Heart right ventricle (tissue), 16 donors: ENCODE measurements at regions of chr13 and their contacts with region 1.

Region 1: DNA sequence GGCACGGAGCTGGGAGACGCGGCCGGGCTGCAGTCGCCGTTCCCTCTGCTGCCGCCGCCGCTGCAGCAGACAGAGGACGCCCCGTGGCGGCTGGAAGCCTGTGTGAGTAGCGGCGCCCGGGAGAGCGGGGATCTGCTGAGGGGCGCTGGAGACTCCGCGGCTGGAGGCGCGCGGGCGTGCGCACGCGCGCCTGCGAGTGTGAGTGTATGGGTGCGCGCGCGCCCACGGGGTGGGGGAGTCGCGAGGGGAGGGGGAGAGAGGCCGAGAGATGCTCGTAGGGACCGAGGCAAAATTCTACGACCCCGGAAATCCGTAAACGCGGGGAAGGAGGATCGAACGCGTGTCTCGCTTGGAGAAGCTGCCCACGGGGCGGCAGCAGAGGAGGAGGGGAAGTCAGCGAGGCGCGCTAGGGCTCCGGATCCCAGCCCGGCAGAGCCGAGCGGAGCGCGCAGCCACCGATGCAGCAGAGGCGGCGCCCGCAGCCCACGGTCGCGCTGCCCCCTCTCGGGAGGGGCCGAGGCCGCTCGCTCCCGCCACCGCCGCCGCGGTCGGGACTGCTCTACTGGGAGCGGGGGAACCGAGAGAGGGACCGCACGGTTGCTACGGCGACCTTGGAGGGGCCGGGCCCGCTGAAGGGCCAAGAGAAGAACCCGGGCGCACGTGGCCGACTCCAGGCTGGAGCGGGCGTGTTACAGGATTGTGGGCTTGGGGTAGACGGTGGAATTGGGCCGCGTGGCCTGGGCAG is at the start of gene ENOX1:
- DNase-seq: peak; percentile 67 to 78
- ATAC-seq: peak; percentile 79 to 93 (median 84)
- H3K4me3 ChIP-seq: peak within 1 kb of the TSS; percentile 50 to 89 (median 70)
- H3K27ac ChIP-seq: peak within 1 kb of the TSS; percentile 54 to 90 (median 84)
- H3K4me1 ChIP-seq: peaks cover 0 to 50% (median 32%) of the 10 kb centered on the region in 9 donors
- H3K27me3 ChIP-seq: peaks cover 0 to 50% (median 28%) of the 10 kb centered on the region in 7 donors
- CTCF ChIP-seq: peak in 8 of 9 donors; percentile 18 to 52 (median 30)
- total RNA-seq, gene ENOX1: 3.1 to 10.4 (median 7.7) TPM

Region 2: GRCh38 chr13:43303033-43303729 is 483.8 kb before region 1 on chr13:
- intact Hi-C with region 1: loop called in 3 of 10 experiments (anchors 5 to 10 kb)
- DNase-seq: peak; percentile 57 to 63
- ATAC-seq: peak; percentile 77 to 92 (median 86)
- H3K4me3 ChIP-seq: no peak overlapping the region
- H3K27ac ChIP-seq: peak overlapping the region in 4 of 10 donors; percentile 17 to 56 (median 48)
- H3K4me1 ChIP-seq: peaks cover 0 to 34% (median 18%) of the 10 kb centered on the region in 9 donors
- H3K27me3 ChIP-seq: no peaks in the 10 kb centered on the region
- CTCF ChIP-seq: peak; percentile 31 to 76 (median 59)

Region 3: DNA sequence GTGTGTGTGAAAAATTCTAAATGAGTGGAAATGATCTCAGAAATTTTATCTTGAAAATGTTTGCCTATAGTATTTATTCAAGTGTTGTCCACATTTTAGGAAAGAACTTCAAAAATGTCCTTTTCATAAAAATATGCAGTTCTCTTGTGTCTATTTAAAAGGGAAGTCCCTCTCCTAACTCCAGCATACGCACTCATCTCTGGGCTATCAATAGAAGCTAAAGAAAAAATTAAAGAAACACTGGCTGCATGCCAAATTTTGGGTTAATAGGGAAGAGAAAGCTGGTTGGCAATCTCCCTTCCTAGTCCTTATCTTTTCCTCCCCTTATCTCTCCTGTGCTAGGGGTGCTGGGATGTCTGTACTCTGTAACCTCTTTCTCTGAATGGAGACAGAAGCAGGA is 313.5 kb before region 1 on chr13:
- intact Hi-C with region 1: loop called in 1 of 10 experiments (anchors 10 kb)
- DNase-seq: peak in 1 of 2 donors; percentile 19
- ATAC-seq: peak; percentile 16 to 82 (median 73)
- H3K4me3 ChIP-seq: no peak overlapping the region
- H3K27ac ChIP-seq: peak overlapping the region in 4 of 10 donors; percentile 1 to 63 (median 28)
- H3K4me1 ChIP-seq: peaks cover 0 to 33% (median 27%) of the 10 kb centered on the region in 9 donors
- H3K27me3 ChIP-seq: no peaks in the 10 kb centered on the region
- CTCF ChIP-seq: no peak

Region 4: GRCh38 chr13:43567608-43568007 is 219.3 kb before region 1 on chr13:
- intact Hi-C with region 1: loop called in 1 of 10 experiments (anchors 10 kb)
- DNase-seq: no peak
- ATAC-seq: no peak
- H3K4me3 ChIP-seq: no peak overlapping the region
- H3K27ac ChIP-seq: no peak overlapping the region
- H3K4me1 ChIP-seq: peaks cover 0 to 29% (median 2%) of the 10 kb centered on the region in 9 donors
- H3K27me3 ChIP-seq: no peaks in the 10 kb centered on the region
- CTCF ChIP-seq: no peak

Region 5: GRCh38 chr13:43686557-43686956 is 100.4 kb before region 1 on chr13:
- intact Hi-C with region 1: loop called in 3 of 10 experiments (anchors 5 to 10 kb)
- DNase-seq: peak; percentile 27 to 80
- ATAC-seq: peak; percentile 57 to 94 (median 88)
- H3K4me3 ChIP-seq: no peak overlapping the region
- H3K27ac ChIP-seq: peak overlapping the region in 9 of 10 donors; percentile 7 to 81 (median 70)
- H3K4me1 ChIP-seq: peaks cover 3 to 53% (median 33%) of the 10 kb centered on the region in 9 donors
- H3K27me3 ChIP-seq: no peaks in the 10 kb centered on the region
- CTCF ChIP-seq: no peak

Region 6: GRCh38 chr13:43815204-43815603 is 28.3 kb after region 1 on chr13:
- intact Hi-C with region 1: no loop called
- DNase-seq: peak in 1 of 2 donors; percentile 30
- ATAC-seq: peak; percentile 84 to 99 (median 94)
- H3K4me3 ChIP-seq: no peak overlapping the region
- H3K27ac ChIP-seq: peak overlapping the region in 7 of 10 donors; percentile 33 to 93 (median 56)
- H3K4me1 ChIP-seq: peaks cover 0 to 15% (median 8%) of the 10 kb centered on the region in 9 donors
- H3K27me3 ChIP-seq: no peaks in the 10 kb centered on the region
- CTCF ChIP-seq: no peak

Region 7: GRCh38 chr13:44093607-44094564 is 306.9 kb after region 1 on chr13:
- intact Hi-C with region 1: no loop called
- DNase-seq: no peak
- ATAC-seq: no peak
- H3K4me3 ChIP-seq: no peak overlapping the region
- H3K27ac ChIP-seq: no peak overlapping the region
- H3K4me1 ChIP-seq: no peaks in the 10 kb centered on the region
- H3K27me3 ChIP-seq: no peaks in the 10 kb centered on the region
- CTCF ChIP-seq: no peak